Ascending aorta (tissue), 2 donors: ENCODE measurements at regions of chr14 and their contacts with region 1.

Region 1: DNA sequence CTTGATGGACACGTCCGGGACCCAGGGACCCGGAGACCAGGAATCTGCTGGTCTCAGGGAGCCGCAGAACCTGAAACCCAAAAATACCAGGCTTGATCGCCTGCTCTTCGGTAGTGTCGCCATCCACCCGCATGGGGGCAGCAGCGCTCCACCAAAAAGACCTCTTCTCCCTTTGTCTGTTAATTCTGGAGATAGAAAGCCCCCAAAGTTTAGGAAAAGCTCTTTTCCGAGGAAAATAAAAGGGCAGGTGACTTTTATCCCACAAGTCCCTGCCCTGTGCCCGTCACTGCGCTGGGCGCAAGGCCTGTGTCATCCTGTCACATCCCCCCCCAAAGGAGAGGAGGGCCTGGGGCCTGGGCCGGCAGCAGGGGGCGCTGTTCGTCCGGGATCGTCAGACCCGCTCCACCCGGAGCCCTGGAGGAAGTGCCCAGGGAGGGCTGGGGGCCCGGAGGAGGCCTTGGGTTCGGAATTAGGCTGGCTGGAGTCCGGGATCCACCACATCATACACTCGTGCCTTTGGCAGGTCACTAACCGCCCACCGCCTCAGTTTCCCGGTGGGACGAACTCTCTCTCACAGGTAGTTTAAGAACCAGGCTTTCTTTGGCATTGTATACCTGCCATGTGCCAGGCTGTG is 31.9 kb downstream of the DAD1 start:
- DNase-seq: peak in 1 of 2 donors; percentile 88
- H3K4me3 ChIP-seq: peak overlapping the region; percentile 50 to 54
- H3K27ac ChIP-seq: peak overlapping the region; percentile 53 to 60
- H3K4me1 ChIP-seq: peaks cover 0 to 11% of the 10 kb centered on the region in 2 donors
- H3K27me3 ChIP-seq: no peaks in the 10 kb centered on the region
- CTCF ChIP-seq: peak; percentile 91 to 100 (median 99)

Region 2: GRCh38 chr14:22011253-22011642 is 545.9 kb before region 1 on chr14:
- intact Hi-C with region 1: no loop called
- DNase-seq: no peak
- H3K4me3 ChIP-seq: no peak overlapping the region
- H3K27ac ChIP-seq: no peak overlapping the region
- H3K4me1 ChIP-seq: no peaks in the 10 kb centered on the region
- H3K27me3 ChIP-seq: no peaks in the 10 kb centered on the region
- CTCF ChIP-seq: no peak

Region 3: DNA sequence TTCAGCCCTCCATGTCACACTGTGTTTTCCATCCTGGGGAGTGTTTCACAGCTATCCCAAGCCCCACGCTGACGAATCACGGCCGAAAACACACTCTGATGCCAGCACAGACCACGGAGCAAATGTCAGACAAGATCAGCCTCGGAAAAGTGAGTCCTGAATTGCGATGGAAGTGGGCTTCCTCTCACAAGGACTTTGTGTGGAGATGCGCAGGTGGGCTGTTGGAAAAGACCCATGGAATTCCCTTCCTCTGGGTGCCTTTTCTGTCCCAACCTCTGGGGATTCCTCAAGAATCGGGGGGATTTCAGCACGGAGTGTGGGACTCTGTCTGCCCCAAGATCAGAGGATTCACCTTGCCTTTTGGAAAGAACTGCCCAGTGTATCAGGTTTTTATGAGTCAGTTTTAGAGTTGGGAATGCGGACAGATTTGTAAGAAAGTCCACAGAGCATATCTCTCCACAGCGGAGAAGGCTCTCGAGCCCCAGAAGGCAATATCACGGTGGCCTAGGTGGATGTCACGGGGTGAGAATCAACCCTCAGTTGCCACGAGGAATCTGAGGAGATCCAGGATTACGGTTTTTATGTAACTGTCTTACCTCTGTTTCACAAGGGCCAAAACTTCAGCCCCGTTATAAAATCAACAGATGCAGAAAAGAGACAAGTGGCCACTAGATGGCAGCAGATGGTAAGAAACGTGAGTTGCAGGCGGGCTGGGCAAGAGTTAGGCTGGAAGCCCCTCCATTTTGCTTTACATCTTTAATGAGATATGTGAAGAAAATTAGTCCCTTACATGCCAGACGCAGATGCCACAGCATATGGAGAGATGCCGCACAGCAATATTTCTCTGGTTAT is 170.0 kb before region 1 on chr14:
- intact Hi-C with region 1: loop called (anchors 5 kb)
- DNase-seq: peak in 1 of 2 donors; percentile 87
- H3K4me3 ChIP-seq: peak overlapping the region in 1 of 2 donors; percentile 52
- H3K27ac ChIP-seq: no peak overlapping the region
- H3K4me1 ChIP-seq: peaks cover 0 to 3% of the 10 kb centered on the region in 2 donors
- H3K27me3 ChIP-seq: no peaks in the 10 kb centered on the region
- CTCF ChIP-seq: peak; percentile 74 to 77 (median 77)

Region 4: DNA sequence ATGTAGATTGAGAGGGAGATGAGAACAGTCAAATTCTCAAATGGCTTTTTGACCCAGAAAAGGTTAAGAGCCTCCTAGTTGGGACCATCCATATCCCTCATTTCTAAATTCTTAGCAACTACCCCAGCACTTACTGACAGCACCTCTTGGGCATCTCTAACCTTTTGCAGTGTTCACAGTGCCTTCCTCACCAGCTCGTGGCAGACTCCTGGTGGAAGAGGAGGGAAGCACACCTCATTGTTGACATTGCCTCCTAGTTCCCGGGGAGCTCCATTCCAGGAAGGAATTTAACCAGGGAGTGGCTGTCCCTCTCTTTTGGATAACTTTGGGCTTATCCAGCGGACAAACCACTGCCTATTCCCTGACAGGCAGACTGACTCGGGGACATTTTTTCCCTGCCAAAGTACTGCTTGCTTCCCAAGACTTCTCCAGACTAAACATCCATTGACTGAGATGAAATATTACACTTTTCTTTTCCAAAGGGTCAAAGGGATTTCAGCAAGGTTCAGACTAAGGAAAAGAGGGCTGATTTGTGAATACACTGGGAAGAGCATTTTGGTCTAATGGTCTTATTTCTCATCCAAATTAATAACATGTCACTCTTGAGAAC is 96.0 kb after region 1 on chr14:
- intact Hi-C with region 1: loop called (anchors 5 kb)
- DNase-seq: peak in 1 of 2 donors; percentile 71
- H3K4me3 ChIP-seq: no peak overlapping the region
- H3K27ac ChIP-seq: no peak overlapping the region
- H3K4me1 ChIP-seq: peaks cover 0 to 2% of the 10 kb centered on the region in 2 donors
- H3K27me3 ChIP-seq: no peaks in the 10 kb centered on the region
- CTCF ChIP-seq: peak; percentile 51 to 67 (median 57)

Region 5: GRCh38 chr14:22836301-22837113 is 279.4 kb after region 1 on chr14 and contains the start of gene MMP14:
- intact Hi-C with region 1: loop called (anchors 5 kb)
- DNase-seq: peak; percentile 67 to 94
- H3K4me3 ChIP-seq: peak within 1 kb of the TSS; percentile 68 to 86
- H3K27ac ChIP-seq: peak within 1 kb of the TSS; percentile 91 to 94
- H3K4me1 ChIP-seq: peaks cover 0 to 20% of the 10 kb centered on the region in 2 donors
- H3K27me3 ChIP-seq: no peaks in the 10 kb centered on the region
- CTCF ChIP-seq: peak in 2 of 3 experiments; percentile 51 to 85
- total RNA-seq, gene MMP14: 178 TPM

Region 6: GRCh38 chr14:22900081-22900799 is 343.1 kb after region 1 on chr14:
- intact Hi-C with region 1: loop called (anchors 1 kb)
- DNase-seq: no peak
- H3K4me3 ChIP-seq: no peak overlapping the region
- H3K27ac ChIP-seq: peak overlapping the region in 1 of 2 donors; percentile 22
- H3K4me1 ChIP-seq: no peaks in the 10 kb centered on the region
- H3K27me3 ChIP-seq: no peaks in the 10 kb centered on the region
- CTCF ChIP-seq: peak; percentile 25 to 65 (median 48)

Region 7: GRCh38 chr14:23057757-23058653 is 500.9 kb after region 1 on chr14:
- intact Hi-C with region 1: loop called (anchors 10 kb)
- DNase-seq: peak; percentile 28 to 86
- H3K4me3 ChIP-seq: peak overlapping the region; percentile 60 to 95
- H3K27ac ChIP-seq: peak overlapping the region in 1 of 2 donors; percentile 73
- H3K4me1 ChIP-seq: peaks cover 3 to 23% of the 10 kb centered on the region in 2 donors
- H3K27me3 ChIP-seq: no peaks in the 10 kb centered on the region
- CTCF ChIP-seq: peak; percentile 87 to 96 (median 92)